GM12878 (cell line): ENCODE measurements at regions of chr20 and their contacts with region 1.

Region 1: DNA sequence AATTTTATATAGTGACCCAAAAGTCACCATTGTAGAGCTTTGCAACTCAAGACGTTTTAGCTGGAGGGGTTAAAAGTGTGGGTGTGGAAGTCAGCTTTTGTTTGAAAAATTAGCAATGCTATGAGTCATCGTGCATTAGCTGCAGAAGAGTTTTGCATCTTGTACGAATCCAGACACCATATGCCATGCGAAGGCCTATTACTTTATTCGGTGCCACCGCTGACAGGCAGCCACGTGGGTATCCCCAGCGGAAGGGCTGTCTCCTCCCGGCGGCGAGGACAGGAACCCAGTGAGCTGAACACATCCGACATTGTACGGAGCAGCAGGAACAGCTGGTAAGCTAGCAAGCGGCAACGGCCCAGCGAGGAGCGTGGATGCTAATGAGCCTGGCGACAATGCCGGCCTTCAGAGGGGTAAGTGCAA is 84.4 kb downstream of the INSM1 start:
- DNase-seq: peak; percentile 63
- ATAC-seq: peak; percentile 95
- H3K4me3 ChIP-seq: peak overlapping the region; percentile 54; the same call in 1 of the 2 replicates
- H3K27ac ChIP-seq: peak overlapping the region; percentile 73
- H3K4me1 ChIP-seq: peaks cover 25% of the 10 kb centered on the region
- H3K27me3 ChIP-seq: no peaks in the 10 kb centered on the region
- CTCF ChIP-seq: peak in 1 of 3 experiments; percentile 4; a peak in 1 of 6 replicates
- EP300 ChIP-seq: 0 out of 4 replicates have a peak, but pooled peaks of 1 of the 2 experiments have one; percentile 12
- POLR2A ChIP-seq: peak; percentile 72
- RAD21 ChIP-seq: 0 out of 2 replicates have a peak, but pooled peaks have one; percentile 2

Region 2: DNA sequence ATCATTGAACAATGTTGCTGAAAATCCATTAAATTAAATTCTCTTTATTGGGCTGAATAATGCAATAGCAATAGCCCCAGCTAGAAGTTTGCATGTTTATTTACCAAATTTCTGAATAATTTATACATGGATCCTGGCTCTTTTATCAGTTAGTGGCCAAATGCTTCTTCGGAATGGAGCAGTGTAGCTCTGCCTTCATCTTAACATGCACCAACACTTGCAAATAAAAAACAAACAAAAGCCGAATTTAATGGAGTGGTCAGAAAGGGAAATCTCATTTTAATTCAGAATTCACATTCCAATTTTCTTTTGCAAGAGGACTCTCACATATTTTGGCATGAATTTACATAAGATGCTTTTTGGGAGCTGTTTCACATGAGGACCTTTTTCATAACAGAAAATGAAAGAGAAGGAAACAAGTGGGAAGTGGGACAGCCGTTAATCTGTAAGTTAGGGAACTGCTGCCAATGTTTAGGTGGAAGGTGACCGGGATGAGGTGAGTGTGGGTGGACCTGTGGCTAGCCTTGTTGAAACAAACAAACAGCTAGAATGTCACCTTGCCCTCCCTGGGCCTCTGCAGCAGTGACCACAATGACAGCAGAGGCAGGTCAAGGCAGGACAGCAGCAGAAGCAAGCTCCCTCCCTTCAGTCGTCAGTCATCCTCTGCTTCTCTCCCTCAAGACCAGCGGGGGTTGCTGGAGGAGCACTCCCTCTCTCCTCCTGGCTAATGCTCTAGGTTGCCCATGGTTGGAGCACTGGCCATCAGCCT is 11.2 kb before region 1 on chr20:
- CTCF ChIA-PET with region 1: interaction called, 12 read pairs
- POLR2A ChIA-PET with region 1: no interaction called
- RAD21 ChIA-PET with region 1: interaction called, 9 read pairs
- SMC1A ChIA-PET with region 1: interaction called, 35 read pairs
- in situ Hi-C with region 1: no loop called
- intact Hi-C with region 1: no loop called
- DNase-seq: no peak
- ATAC-seq: peak; percentile 56
- H3K4me3 ChIP-seq: no peak overlapping the region
- H3K27ac ChIP-seq: no peak overlapping the region
- H3K4me1 ChIP-seq: peaks cover 5% of the 10 kb centered on the region; the same call in 1 of the 2 replicates
- H3K27me3 ChIP-seq: no peaks in the 10 kb centered on the region
- CTCF ChIP-seq: no peak
- EP300 ChIP-seq: peak in 1 of 2 experiments; percentile 24; a peak in 1 of 4 replicates
- POLR2A ChIP-seq: no peak
- RAD21 ChIP-seq: no peak

Region 3: DNA sequence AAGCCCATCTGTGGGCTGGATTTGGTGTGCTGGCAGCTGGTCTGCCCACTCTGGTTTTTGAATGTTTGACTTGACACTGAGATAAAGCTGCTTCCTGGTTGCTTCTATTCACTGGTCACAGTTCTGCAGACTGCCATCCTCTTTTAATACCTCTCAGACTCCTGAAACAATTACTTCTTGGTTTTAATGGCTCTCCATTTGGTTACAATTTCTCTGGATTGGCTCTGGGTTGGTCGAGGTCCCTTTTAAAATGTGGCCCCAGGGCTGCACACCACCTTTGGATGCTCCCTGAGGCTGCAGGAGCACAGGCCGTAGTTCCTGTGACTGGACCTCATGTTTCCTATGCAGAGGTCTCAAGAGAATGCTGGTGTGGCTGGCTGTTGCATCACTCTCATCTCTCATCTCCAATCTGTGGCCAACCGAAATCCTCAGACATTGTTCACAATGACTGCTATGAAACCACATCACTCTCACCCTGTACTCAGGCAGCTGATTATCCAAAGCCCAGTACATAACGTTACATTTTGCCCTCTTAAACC is 14.1 kb after region 1 on chr20:
- CTCF ChIA-PET with region 1: interaction called, 42 read pairs
- POLR2A ChIA-PET with region 1: interaction called, 46 read pairs
- RAD21 ChIA-PET with region 1: interaction called, 27 read pairs
- SMC1A ChIA-PET with region 1: interaction called, 163 read pairs
- in situ Hi-C with region 1: no loop called
- intact Hi-C with region 1: loop called (anchors 2 kb)
- DNase-seq: peak; percentile 92
- ATAC-seq: peak; percentile 87
- H3K4me3 ChIP-seq: no peak overlapping the region
- H3K27ac ChIP-seq: peak overlapping the region; percentile 86
- H3K4me1 ChIP-seq: peaks cover 36% of the 10 kb centered on the region
- H3K27me3 ChIP-seq: no peaks in the 10 kb centered on the region
- CTCF ChIP-seq: no peak
- EP300 ChIP-seq: peak; percentile 77; a peak in 3 of 4 replicates
- POLR2A ChIP-seq: peak; percentile 61
- RAD21 ChIP-seq: no peak